Dorsolateral prefrontal cortex (tissue), 120 donors: ENCODE measurements at regions of chr12 and their contacts with region 1.

Region 1: DNA sequence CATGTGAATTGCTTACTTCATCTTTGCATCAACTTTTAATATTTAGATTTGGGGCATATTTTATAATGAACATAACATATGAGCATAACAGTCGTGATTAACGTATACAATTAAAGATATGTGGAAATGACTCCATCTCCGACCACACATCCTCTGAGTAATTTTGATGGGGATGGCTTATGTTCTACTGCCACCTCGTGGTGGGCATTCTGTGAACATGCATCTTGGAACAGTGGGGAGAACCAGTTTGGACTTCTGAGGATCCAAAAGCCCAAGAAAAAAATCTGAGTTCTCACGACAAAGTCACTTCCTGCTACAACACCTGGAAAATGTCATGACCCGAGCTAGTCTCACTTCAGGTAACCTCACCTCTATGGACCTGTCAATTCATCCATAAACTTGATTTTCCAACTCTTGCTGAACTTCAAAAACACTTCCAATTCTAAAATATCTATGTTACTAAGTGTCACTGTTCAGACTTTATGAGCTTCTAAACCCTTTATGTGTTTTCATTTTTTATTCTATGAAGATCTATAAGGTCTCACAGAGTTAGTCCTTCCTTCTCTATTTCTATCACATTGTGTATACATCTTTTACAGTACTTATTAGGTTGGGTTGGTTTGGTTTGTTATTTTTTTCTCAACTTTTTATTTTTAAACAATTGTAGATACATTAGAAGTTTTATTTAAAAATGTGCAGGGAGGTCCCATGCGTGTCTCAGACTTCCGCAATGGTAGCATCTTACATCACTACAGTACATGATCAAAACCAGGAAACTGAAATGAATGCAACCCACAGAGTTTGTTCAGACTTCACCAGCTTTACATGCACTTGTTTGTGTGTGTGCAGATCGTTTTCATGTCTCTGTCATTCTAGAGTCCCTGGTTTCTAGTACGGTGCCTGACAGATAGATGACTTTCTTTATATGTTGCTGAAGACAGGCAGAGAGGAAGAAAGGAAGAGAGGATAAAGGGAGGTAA is 38.2 kb upstream of the STAB2 start:
- DNase-seq: peak; percentile 28 to 84 (median 63)
- H3K4me3 ChIP-seq: no peak overlapping the region
- H3K27ac ChIP-seq: no peak overlapping the region
- H3K27me3 ChIP-seq: peaks cover 0 to 21% (median 0%) of the 10 kb centered on the region in 45 donors
- CTCF ChIP-seq: peak; percentile 75 to 98 (median 93)

Region 2: GRCh38 chr12:102883204-102883799 is 665.6 kb before region 1 on chr12:
- intact Hi-C with region 1: loop called (anchors 5 kb)
- DNase-seq: peak; percentile 18 to 73 (median 60)
- H3K4me3 ChIP-seq: no peak overlapping the region
- H3K27ac ChIP-seq: no peak overlapping the region
- H3K27me3 ChIP-seq: peaks cover 0 to 49% (median 4%) of the 10 kb centered on the region in 45 donors
- CTCF ChIP-seq: peak; percentile 31 to 86 (median 78)

Region 3: GRCh38 chr12:102948941-102949352 is 600.0 kb before region 1 on chr12:
- intact Hi-C with region 1: loop called (anchors 2 kb)
- DNase-seq: peak in 9 of 10 donors; percentile 30 to 86 (median 75)
- H3K4me3 ChIP-seq: no peak overlapping the region
- H3K27ac ChIP-seq: no peak overlapping the region
- H3K27me3 ChIP-seq: peaks cover 0 to 54% (median 17%) of the 10 kb centered on the region in 45 donors
- CTCF ChIP-seq: peak; percentile 85 to 98 (median 94)

Region 4: DNA sequence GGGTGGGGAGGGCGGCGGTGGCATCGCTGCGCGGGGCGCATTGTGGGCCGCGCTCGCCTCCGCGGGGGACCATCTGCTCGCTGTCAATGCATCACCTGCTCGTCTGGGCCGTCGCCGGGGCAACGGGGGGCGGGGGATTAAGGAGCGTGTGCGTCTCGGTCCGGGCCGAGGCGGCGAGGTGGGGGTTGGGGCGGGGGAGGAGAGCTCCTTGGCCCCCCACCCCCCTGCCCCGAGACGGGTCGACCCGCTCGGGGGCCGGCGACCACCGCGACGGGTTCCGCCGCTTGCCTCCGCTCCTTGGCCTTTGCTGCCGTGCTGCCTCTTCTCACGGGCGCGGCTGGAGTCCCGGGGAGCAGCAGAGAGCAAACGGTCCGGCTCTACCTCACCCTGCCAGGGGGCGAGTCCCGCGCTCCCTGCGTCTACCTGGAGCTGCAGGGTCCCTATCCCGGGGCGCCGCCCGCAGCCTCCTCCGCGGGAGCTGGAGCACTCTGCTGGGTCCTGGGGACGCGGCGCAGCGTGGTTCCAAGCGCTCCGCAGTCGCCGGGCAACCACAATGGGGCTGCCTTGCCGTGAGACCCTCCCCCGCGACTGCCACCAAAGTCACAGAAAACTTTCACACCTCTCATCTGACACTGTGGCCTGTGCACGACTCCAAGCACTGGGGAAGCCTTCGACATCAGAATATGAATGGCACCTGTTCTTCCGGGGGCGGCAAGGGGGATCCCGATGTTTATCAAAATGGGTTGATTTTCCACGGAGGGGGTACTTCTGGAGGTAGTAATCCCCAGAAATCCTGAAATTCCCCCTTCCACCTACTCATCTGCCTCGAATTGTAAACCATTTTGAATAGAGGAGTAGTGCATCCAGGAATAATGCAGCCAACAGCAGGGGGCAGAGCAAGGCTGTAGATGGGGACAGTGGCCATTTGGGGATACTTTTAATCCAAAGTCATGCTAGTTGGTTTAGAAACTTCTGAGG is 53.1 kb before region 1 on chr12 and contains the start of gene C12orf42:
- intact Hi-C with region 1: loop called in 1 of 2 experiments (anchors 5 kb)
- DNase-seq: peak in 8 of 10 donors; percentile 14 to 69 (median 57)
- H3K4me3 ChIP-seq: peak within 1 kb of the TSS; percentile 29 to 77 (median 59)
- H3K27ac ChIP-seq: peak within 1 kb of the TSS in 18 of 59 donors; percentile 13 to 57 (median 36)
- H3K27me3 ChIP-seq: peaks cover 0 to 15% (median 0%) of the 10 kb centered on the region in 45 donors
- CTCF ChIP-seq: peak in 55 of 56 donors; percentile 16 to 70 (median 56)
- total RNA-seq, gene C12orf42: 0.34 to 4.4 (median 1.1) TPM in 99 of 120 experiments, not detected in the others

Region 5: GRCh38 chr12:103698752-103699560 is 150.0 kb after region 1 on chr12:
- intact Hi-C with region 1: no loop called
- DNase-seq: no peak
- H3K4me3 ChIP-seq: no peak overlapping the region
- H3K27ac ChIP-seq: no peak overlapping the region
- H3K27me3 ChIP-seq: peaks cover 0 to 10% (median 0%) of the 10 kb centered on the region in 45 donors
- CTCF ChIP-seq: no peak

Region 6: DNA sequence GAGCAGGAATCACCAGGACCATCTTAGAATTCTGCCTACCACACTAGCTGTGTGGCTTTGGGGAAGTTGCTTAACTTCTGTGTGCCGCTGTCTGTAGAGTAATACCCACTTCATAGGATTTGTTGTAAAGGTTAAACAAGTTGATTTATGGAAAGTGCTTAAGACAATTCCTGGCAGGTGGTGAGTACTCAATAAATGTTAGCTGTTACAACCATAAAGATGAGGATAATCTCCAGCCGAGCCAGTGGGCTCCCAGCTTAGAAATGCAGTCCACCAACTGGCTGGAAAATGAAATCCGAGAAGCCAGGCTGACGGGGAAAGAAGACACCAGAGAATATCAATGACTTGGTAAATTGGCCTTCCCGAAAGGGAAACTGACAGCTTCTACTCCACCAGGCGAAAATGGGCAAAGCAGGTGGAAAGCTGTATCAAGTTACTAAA is 1081.3 kb after region 1 on chr12:
- intact Hi-C with region 1: no loop called
- DNase-seq: no peak
- H3K4me3 ChIP-seq: no peak overlapping the region
- H3K27ac ChIP-seq: no peak overlapping the region
- H3K27me3 ChIP-seq: no peaks in the 10 kb centered on the region
- CTCF ChIP-seq: no peak